OCI-LY7 (cell line): ENCODE measurements at regions of chr11 and their contacts with region 1.

Region 1: DNA sequence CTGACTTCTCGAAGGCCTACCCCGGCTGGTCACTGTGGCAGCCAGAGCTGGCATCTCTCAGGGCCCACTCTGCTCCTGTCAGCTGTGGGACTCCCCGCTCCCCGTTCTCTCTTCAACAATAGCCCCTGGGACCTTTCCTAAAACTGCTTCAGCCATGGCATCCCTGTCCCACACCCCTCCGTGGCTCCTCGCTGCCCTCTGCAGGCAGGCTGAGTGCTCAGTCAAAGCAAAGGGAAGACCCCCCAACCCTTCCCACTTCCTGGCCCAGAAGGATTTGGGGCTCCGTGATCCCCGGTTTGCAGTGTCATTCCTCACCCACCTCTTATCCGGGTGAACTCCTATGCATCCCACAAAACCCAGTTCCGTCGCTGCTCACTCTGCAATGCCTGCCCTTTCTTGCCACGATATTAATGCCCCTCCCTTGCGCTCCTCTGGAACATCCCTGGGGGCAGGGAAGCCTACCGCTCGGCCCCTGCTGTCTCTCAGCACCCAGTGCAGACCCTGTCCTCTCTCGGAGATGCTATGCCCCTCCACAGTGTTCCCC is 1.6 kb upstream of the TH start:
- DNase-seq: peak; percentile 10
- H3K4me3 ChIP-seq: no peak overlapping the region
- H3K27ac ChIP-seq: no peak overlapping the region
- H3K4me1 ChIP-seq: no peaks in the 10 kb centered on the region
- CTCF ChIP-seq: peak; percentile 70

Region 2: GRCh38 chr11:1706634-1707400 is 466.4 kb before region 1 on chr11:
- CTCF ChIA-PET with region 1: no interaction called
- POLR2A ChIA-PET with region 1: no interaction called
- intact Hi-C with region 1: loop called (anchors 5 kb)
- DNase-seq: no peak
- H3K4me3 ChIP-seq: no peak overlapping the region
- H3K27ac ChIP-seq: no peak overlapping the region
- H3K4me1 ChIP-seq: no peaks in the 10 kb centered on the region
- CTCF ChIP-seq: peak; percentile 39; the same call in 1 of the 2 replicates

Region 3: DNA sequence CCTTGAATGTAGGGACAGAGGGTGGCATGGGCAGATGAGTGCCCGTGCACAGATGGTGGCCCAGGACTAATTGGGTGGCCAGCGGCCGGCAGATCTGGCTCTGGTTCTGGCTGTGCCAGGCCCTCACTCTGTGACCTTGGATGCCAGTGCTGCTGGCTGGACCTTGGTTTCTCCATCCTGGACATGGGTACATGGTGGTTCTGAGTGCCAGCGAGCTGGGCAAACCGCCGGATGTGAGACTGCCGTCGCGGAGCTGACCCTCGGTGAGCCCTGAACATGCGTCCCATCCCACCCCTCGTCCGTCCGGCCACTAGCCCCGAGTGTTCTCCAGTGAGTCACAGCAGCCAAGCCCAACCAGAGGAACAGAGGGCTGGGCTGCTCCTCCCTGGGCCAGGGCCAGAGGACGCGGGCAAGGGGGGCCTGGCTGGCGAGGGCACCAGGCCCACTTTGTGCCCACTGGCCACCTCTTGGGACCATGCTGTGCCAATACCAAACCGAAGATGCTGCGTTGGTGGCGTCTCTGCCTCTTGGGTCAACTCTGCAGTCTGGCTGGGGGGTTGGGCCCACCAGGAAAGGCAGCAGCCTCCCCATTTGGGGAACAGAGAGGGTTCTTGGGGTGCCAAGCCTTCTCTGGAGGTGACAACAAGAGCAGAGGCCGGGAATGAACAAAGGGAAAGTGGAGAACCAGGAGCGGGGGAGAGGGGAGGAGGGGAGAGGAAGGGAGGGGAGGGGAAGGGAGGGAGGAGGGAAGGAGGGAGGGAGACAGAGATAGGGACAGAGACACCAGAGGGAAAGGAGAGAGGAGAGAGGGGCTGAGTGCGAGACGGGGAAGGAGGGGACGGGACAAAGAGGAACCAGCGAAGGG is 309.6 kb before region 1 on chr11:
- CTCF ChIA-PET with region 1: no interaction called
- POLR2A ChIA-PET with region 1: no interaction called
- intact Hi-C with region 1: no loop called
- DNase-seq: no peak
- H3K4me3 ChIP-seq: no peak overlapping the region
- H3K27ac ChIP-seq: no peak overlapping the region
- H3K4me1 ChIP-seq: no peaks in the 10 kb centered on the region
- CTCF ChIP-seq: no peak

Region 4: GRCh38 chr11:2156416-2157182 is 16.6 kb before region 1 on chr11:
- CTCF ChIA-PET with region 1: no interaction called
- POLR2A ChIA-PET with region 1: no interaction called
- intact Hi-C with region 1: no loop called
- DNase-seq: peak; percentile 46
- H3K4me3 ChIP-seq: no peak overlapping the region
- H3K27ac ChIP-seq: no peak overlapping the region
- H3K4me1 ChIP-seq: peaks cover 3% of the 10 kb centered on the region
- CTCF ChIP-seq: peak; percentile 78